ENCODE measurements at regions of chr18 and their contacts with region 1.

Region 1: DNA sequence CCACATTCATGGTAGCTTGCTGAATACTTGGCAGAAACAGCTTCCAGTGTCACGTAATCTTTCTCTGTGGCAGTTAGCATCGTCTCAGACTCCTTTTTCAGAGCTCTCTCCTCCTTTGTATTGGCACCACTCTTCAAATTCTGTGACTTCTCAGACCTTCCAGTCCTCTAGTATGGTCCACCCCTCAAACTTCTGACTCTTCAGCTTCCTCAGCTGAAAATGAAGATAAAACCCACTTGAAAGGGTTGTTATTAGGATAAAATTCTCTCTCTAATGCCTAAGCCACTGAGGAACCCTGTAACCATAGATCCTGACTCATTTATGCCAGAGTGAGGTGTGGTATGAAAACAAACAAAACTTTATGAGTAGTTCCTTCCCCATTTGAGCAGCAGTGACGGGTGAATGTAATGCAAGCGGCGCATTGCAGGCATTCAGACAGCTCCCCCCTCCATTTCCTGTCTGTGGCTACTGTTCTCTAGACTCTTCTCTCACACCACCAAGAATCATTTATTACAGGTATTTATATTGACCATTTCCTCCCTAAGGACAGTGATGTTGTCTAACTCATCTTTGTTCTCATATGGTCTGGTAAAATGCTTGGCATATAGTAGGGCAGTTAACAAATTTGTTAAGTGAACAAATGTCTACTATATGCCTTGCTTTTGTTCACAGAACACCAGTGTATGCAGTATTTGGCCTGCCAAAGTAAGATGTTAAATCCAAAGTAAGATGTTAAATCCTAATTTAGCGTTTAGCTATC is 35.3 kb downstream of the GALNT1 start:
- DNase-seq: peak; percentile 81
- ATAC-seq: peak; percentile 94
- H3K4me3 Mint-ChIP-seq: no peak overlapping the region
- H3K27ac Mint-ChIP-seq: no peak overlapping the region
- H3K4me1 Mint-ChIP-seq: peaks cover 16% of the 10 kb centered on the region
- H3K27me3 Mint-ChIP-seq: no peaks in the 10 kb centered on the region

Region 2: GRCh38 chr18:34976899-34977837 is 639.7 kb before region 1 on chr18:
- CTCF ChIA-PET with region 1: no interaction called
- POLR2A ChIA-PET with region 1: no interaction called
- intact Hi-C with region 1: loop called in 1 of 2 experiments (anchors 10 kb)
- DNase-seq: peak; percentile 85
- ATAC-seq: peak; percentile 55
- H3K4me3 Mint-ChIP-seq: peak overlapping the region; percentile 73
- H3K27ac Mint-ChIP-seq: no peak overlapping the region
- H3K4me1 Mint-ChIP-seq: peaks cover 23% of the 10 kb centered on the region
- H3K27me3 Mint-ChIP-seq: peaks cover 32% of the 10 kb centered on the region

Region 3: GRCh38 chr18:35484034-35484433 is 132.8 kb before region 1 on chr18:
- CTCF ChIA-PET with region 1: no interaction called
- POLR2A ChIA-PET with region 1: interaction called, 3 read pairs
- intact Hi-C with region 1: loop called in 1 of 2 experiments (anchors 5 kb)
- DNase-seq: no peak
- ATAC-seq: peak; percentile 95
- H3K4me3 Mint-ChIP-seq: no peak overlapping the region
- H3K27ac Mint-ChIP-seq: no peak overlapping the region
- H3K4me1 Mint-ChIP-seq: peaks cover 47% of the 10 kb centered on the region
- H3K27me3 Mint-ChIP-seq: no peaks in the 10 kb centered on the region

Measured in activated CD4-positive, alpha-beta T cell treated with anti-CD3 and anti-CD28 coated beads for 36 hours (primary cell).